Mammary epithelial cell (primary cell): ENCODE measurements at regions of chr6 and their contacts with region 1.

Region 1: GRCh38 chr6:31403283-31403989 is at the start of gene MICA:
- DNase-seq: peak; percentile 95
- H3K4me3 ChIP-seq: peak within 1 kb of the TSS; percentile 87 to 90 (median 88)
- H3K27ac ChIP-seq: peak within 1 kb of the TSS; percentile 95
- H3K4me1 ChIP-seq: peaks cover 19% of the 10 kb centered on the region
- H3K27me3 ChIP-seq: no peaks in the 10 kb centered on the region
- CTCF ChIP-seq: no peak
- total RNA-seq, gene MICA: 32.3 to 51.2 TPM

Region 2: GRCh38 chr6:30154709-30155519 is 1248.5 kb before region 1 on chr6:
- CTCF ChIA-PET with region 1: no interaction called
- dilution Hi-C with region 1: no loop called
- in situ Hi-C with region 1: no loop called
- intact Hi-C with region 1: no loop called
- DNase-seq: peak; percentile 61
- H3K4me3 ChIP-seq: no peak overlapping the region
- H3K27ac ChIP-seq: no peak overlapping the region
- H3K4me1 ChIP-seq: peaks cover 31% of the 10 kb centered on the region
- H3K27me3 ChIP-seq: no peaks in the 10 kb centered on the region
- CTCF ChIP-seq: no peak

Region 3: DNA sequence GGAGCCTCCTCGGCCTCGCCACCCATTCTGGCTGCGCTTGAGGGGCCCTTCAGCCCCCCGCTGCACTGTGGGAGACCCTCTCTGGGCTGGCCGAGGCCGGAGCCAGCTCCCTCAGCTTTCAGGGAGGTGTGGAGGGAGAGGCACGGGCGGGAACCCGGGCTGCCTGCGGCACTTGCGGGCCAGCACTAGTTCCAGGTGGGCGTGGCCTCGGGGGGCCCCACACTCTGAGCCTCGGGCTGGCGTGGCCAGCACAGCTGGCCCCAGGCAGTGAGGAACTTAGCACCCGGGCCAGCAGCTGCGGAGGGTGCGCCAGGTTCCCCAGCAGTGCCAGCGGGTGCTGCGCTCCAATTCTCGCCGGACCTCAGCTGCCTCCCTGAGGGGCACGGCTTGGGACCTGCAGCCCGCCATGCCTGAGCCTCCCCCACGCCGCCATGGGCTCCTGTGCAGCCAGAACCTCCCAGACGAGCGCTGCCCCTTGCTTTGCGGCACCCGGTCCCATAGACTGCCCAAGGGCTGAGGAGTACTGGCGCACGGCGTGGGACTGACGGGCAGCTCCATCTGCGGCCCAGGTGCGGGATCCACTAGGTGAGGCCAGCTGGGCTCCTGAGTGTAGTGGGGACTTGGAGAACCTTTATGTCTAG is 386.7 kb before region 1 on chr6:
- CTCF ChIA-PET with region 1: no interaction called
- dilution Hi-C with region 1: no loop called
- in situ Hi-C with region 1: no loop called
- intact Hi-C with region 1: no loop called
- DNase-seq: no peak
- H3K4me3 ChIP-seq: no peak overlapping the region
- H3K27ac ChIP-seq: no peak overlapping the region
- H3K4me1 ChIP-seq: no peaks in the 10 kb centered on the region
- H3K27me3 ChIP-seq: no peaks in the 10 kb centered on the region
- CTCF ChIP-seq: no peak

Region 4: GRCh38 chr6:31087494-31088089 is 315.8 kb before region 1 on chr6:
- CTCF ChIA-PET with region 1: interaction called, 10 read pairs
- dilution Hi-C with region 1: no loop called
- in situ Hi-C with region 1: no loop called
- intact Hi-C with region 1: no loop called
- DNase-seq: peak; percentile 73
- H3K4me3 ChIP-seq: no peak overlapping the region
- H3K27ac ChIP-seq: no peak overlapping the region
- H3K4me1 ChIP-seq: peaks cover 8% of the 10 kb centered on the region
- H3K27me3 ChIP-seq: no peaks in the 10 kb centered on the region
- CTCF ChIP-seq: peak; percentile 74

Region 5: GRCh38 chr6:31423550-31423949 is 20.1 kb after region 1 on chr6:
- CTCF ChIA-PET with region 1: no interaction called
- dilution Hi-C with region 1: no loop called
- in situ Hi-C with region 1: no loop called
- intact Hi-C with region 1: loop called (anchors 2 kb)
- DNase-seq: no peak
- H3K4me3 ChIP-seq: no peak overlapping the region
- H3K27ac ChIP-seq: no peak overlapping the region
- H3K4me1 ChIP-seq: no peaks in the 10 kb centered on the region
- H3K27me3 ChIP-seq: no peaks in the 10 kb centered on the region
- CTCF ChIP-seq: no peak

Region 6: GRCh38 chr6:31597006-31597405 is 193.6 kb after region 1 on chr6:
- CTCF ChIA-PET with region 1: no interaction called
- dilution Hi-C with region 1: no loop called
- in situ Hi-C with region 1: no loop called
- intact Hi-C with region 1: loop called (anchors 1 kb)
- DNase-seq: no peak
- H3K4me3 ChIP-seq: no peak overlapping the region
- H3K27ac ChIP-seq: no peak overlapping the region
- H3K4me1 ChIP-seq: no peaks in the 10 kb centered on the region
- H3K27me3 ChIP-seq: no peaks in the 10 kb centered on the region
- CTCF ChIP-seq: peak; percentile 26 to 27